ENCODE measurements at regions of chr11 and their contacts with region 1.

Region 1: DNA sequence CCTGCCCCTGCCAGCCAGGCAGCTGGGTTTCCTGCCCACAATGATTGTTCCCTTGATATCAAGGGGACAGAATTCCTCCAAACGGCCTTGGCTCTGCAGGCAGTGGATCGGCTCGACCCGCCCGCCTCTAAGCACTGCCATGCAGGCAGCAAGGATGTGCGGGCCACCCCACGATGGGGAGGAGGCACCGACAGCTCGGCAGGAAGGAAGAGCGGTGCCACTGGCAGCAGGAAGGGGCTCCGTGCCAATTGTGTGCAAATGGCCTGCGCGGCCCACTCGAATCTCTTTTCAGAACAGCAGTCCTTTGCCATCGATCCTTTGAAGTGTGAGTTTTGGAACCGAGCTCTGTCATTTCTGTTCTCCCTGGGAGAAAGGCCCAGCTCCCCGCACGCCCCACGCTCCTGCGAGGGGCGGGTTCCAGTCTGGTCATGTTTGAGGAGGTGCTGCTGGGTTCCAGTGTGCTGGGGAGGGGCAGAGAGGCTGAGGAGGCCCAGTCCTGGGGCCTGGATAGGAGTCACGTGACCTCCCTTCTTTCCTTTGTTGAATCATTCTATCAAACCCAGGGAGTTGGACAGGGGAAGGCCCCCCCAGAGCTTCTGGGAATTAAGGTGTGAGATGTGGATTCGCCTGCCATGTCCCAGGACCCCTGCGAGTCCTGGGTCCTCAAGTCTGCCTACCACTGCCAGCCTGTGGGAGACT is 406.0 kb downstream of the CTTN start:
- DNase-seq: no peak
- ATAC-seq: no peak
- H3K4me3 ChIP-seq: no peak overlapping the region
- H3K27ac ChIP-seq: no peak overlapping the region
- H3K4me1 ChIP-seq: no peaks in the 10 kb centered on the region
- H3K27me3 ChIP-seq: no peaks in the 10 kb centered on the region
- CTCF ChIP-seq: no peak

Region 2: GRCh38 chr11:70717936-70718595 is 86.2 kb before region 1 on chr11:
- intact Hi-C with region 1: no loop called
- DNase-seq: no peak
- ATAC-seq: no peak
- H3K4me3 ChIP-seq: no peak overlapping the region
- H3K27ac ChIP-seq: no peak overlapping the region
- H3K4me1 ChIP-seq: no peaks in the 10 kb centered on the region
- H3K27me3 ChIP-seq: no peaks in the 10 kb centered on the region
- CTCF ChIP-seq: no peak

Region 3: DNA sequence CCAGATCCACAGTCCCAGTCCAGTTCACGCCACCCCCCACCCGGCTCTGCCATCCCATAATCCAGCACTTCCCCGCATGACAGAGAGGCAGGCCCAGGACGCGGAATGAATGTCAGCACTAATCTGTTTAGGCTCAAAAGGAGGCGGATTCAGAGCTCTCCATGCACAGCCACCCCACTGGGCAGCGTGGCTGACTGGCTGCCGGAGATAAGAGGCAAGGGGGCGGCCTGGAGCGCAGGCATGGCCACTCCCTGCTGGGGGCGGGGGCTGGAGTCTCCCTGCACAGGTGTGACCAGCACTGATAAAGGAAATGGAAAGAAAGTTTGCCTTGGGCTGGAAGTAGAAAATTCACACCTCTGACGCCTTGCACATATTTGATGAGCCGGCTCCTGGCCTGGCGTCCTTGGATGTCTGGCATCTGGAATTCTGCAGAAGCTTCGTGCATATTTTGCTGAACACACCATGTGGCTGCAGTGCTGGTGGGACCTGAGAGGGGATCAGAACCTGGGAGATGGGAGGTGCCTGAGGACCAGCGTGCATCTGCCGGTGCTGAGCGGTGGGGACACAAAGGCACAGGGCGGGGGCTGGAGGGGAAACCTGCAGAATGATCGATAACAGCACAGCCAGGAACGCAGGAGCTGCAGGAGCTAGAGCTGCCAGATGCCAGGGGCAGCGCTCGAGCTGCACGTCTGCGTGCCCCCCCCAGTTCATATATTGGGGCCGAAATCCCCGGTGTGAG is 61.6 kb before region 1 on chr11:
- intact Hi-C with region 1: loop called in 1 of 3 experiments (anchors 10 kb)
- DNase-seq: peak in 5 of 6 donors; percentile 54 to 77 (median 59)
- ATAC-seq: peak; percentile 79 to 98 (median 84)
- H3K4me3 ChIP-seq: no peak overlapping the region
- H3K27ac ChIP-seq: no peak overlapping the region
- H3K4me1 ChIP-seq: no peaks in the 10 kb centered on the region
- H3K27me3 ChIP-seq: no peaks in the 10 kb centered on the region
- CTCF ChIP-seq: no peak